ENCODE measurements at regions of chr4 and their contacts with region 1.

Region 1: GRCh38 chr4:172035562-172035961 is 222.4 kb downstream of the GALNTL6 start:
- DNase-seq: no peak
- ATAC-seq: no peak
- H3K4me3 ChIP-seq: no peak overlapping the region
- H3K27ac ChIP-seq: no peak overlapping the region
- H3K4me1 ChIP-seq: no peaks in the 10 kb centered on the region
- H3K27me3 ChIP-seq: no peaks in the 10 kb centered on the region
- CTCF ChIP-seq: no peak
- EP300 ChIP-seq: no peak
- POLR2A ChIP-seq: no peak
- RAD21 ChIP-seq: no peak

Region 2: GRCh38 chr4:170138580-170139194 is 1896.9 kb before region 1 on chr4:
- CTCF ChIA-PET with region 1: no interaction called
- POLR2A ChIA-PET with region 1: no interaction called
- in situ Hi-C with region 1: no loop called
- intact Hi-C with region 1: loop called (anchors 5 kb)
- DNase-seq: peak; percentile 57
- ATAC-seq: peak; percentile 94
- H3K4me3 ChIP-seq: no peak overlapping the region
- H3K27ac ChIP-seq: no peak overlapping the region
- H3K4me1 ChIP-seq: no peaks in the 10 kb centered on the region
- H3K27me3 ChIP-seq: no peaks in the 10 kb centered on the region
- CTCF ChIP-seq: peak; percentile 89
- EP300 ChIP-seq: no peak
- POLR2A ChIP-seq: no peak
- RAD21 ChIP-seq: no peak

Region 3: GRCh38 chr4:171667906-171668305 is 367.7 kb before region 1 on chr4:
- CTCF ChIA-PET with region 1: no interaction called
- POLR2A ChIA-PET with region 1: no interaction called
- in situ Hi-C with region 1: no loop called
- intact Hi-C with region 1: no loop called
- DNase-seq: no peak
- ATAC-seq: no peak
- H3K4me3 ChIP-seq: no peak overlapping the region
- H3K27ac ChIP-seq: no peak overlapping the region
- H3K4me1 ChIP-seq: no peaks in the 10 kb centered on the region
- H3K27me3 ChIP-seq: no peaks in the 10 kb centered on the region
- CTCF ChIP-seq: no peak
- EP300 ChIP-seq: no peak
- POLR2A ChIP-seq: no peak
- RAD21 ChIP-seq: no peak

Region 4: DNA sequence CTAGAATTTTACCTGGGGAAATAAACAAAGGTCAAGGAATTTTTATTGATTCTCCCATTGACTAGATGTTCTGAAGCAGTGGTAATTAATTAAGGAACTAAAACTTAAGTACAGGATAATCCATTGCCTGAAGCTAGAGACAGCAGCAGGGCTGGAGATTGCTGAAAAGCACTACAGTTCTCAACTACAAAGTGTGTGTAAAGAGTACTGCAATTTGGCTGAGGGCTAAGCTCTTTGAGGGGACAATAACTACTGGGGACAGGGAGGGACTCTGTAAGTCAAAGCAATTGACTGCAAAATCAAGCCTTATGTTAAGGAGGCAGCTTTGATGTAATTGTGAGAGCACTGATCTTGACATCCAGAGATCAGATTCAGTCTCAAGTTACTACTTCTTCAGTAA is 38.0 kb after region 1 on chr4:
- CTCF ChIA-PET with region 1: no interaction called
- POLR2A ChIA-PET with region 1: no interaction called
- in situ Hi-C with region 1: no loop called
- intact Hi-C with region 1: no loop called
- DNase-seq: no peak
- ATAC-seq: no peak
- H3K4me3 ChIP-seq: no peak overlapping the region
- H3K27ac ChIP-seq: no peak overlapping the region
- H3K4me1 ChIP-seq: no peaks in the 10 kb centered on the region
- H3K27me3 ChIP-seq: no peaks in the 10 kb centered on the region
- CTCF ChIP-seq: no peak
- EP300 ChIP-seq: no peak
- POLR2A ChIP-seq: no peak
- RAD21 ChIP-seq: no peak

Region 5: DNA sequence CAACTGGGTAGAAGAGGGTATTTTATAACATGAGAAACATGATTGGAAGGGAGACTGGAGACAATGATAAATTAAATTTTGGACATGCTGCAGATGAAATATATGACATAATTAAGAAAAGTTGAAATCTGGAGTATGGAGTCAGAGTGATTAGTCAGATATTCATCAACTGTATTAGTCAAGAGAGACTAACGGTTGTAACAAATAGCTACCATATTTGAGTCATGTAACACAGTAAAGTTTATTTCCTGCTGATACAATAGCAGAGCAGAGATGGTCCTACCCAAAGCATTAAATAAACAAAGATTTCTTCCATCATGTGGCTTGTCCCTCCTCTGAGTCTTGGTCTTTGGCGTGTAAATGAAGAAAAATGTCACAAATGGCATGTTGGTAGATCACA is 99.0 kb after region 1 on chr4:
- CTCF ChIA-PET with region 1: no interaction called
- POLR2A ChIA-PET with region 1: no interaction called
- in situ Hi-C with region 1: no loop called
- intact Hi-C with region 1: no loop called
- DNase-seq: no peak
- ATAC-seq: no peak
- H3K4me3 ChIP-seq: no peak overlapping the region
- H3K27ac ChIP-seq: no peak overlapping the region
- H3K4me1 ChIP-seq: no peaks in the 10 kb centered on the region
- H3K27me3 ChIP-seq: no peaks in the 10 kb centered on the region
- CTCF ChIP-seq: no peak
- EP300 ChIP-seq: no peak
- POLR2A ChIP-seq: no peak
- RAD21 ChIP-seq: no peak

Measured in HepG2 (cell line).